ENCODE measurements at regions of chr22 and their contacts with region 1.

Region 1: GRCh38 chr22:30289134-30289979 is at the start of gene CASTOR1:
- DNase-seq: peak; percentile 85 to 94
- H3K4me3 ChIP-seq: peak within 1 kb of the TSS; percentile 87
- H3K27ac ChIP-seq: peak within 1 kb of the TSS; percentile 44
- H3K4me1 ChIP-seq: peaks cover 32% of the 10 kb centered on the region
- H3K27me3 ChIP-seq: no peaks in the 10 kb centered on the region
- CTCF ChIP-seq: no peak
- total RNA-seq, gene CASTOR1: 10.6 and 11.1 TPM in 2 replicates

Region 2: DNA sequence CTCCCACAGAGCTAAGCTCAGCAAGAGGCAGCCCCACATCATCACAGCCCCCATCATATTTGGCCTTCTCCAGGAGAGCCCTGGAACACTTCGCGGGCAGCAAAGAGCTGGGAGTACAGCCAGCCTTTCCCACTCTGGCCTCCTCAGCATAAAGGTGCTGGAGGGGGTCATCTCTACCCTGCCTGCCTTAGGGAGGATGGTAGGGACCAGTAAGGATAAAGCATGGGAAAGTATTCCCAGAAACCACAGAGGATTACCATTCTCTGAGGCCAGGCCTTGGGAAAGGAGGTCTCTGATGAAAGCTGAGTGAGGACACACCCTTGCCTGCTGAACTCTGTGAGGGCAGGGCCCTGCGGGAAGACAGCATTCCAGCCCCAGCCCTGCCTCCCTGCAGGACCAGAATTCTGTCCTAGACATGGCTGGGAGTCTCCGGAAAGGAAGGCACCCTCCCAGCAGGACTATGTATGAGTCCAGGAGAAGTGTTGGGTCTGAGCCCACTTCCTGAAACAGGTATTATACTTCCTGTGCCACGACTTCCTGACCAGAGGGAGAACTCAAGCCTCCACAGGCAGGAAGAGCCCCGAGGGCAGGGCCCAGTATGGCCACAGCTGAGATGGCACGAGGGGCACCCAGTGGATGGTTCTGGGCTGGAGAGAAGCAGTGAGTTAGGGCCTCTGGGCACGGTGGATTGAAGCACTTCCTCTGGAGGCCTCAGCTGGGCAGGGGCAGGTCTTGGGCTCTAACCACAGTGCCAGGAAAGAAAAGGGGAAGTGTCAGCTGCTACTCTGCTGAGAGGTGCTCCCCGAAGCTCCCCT is 12.8 kb after region 1 on chr22:
- CTCF ChIA-PET with region 1: interaction called, 19 read pairs
- POLR2A ChIA-PET with region 1: no interaction called
- intact Hi-C with region 1: loop called (anchors 1 kb)
- DNase-seq: peak; percentile 82 to 95
- H3K4me3 ChIP-seq: no peak overlapping the region; the same call in 1 of the 2 replicates
- H3K27ac ChIP-seq: peak overlapping the region; percentile 95
- H3K4me1 ChIP-seq: peaks cover 97% of the 10 kb centered on the region
- H3K27me3 ChIP-seq: no peaks in the 10 kb centered on the region
- CTCF ChIP-seq: no peak

Region 3: DNA sequence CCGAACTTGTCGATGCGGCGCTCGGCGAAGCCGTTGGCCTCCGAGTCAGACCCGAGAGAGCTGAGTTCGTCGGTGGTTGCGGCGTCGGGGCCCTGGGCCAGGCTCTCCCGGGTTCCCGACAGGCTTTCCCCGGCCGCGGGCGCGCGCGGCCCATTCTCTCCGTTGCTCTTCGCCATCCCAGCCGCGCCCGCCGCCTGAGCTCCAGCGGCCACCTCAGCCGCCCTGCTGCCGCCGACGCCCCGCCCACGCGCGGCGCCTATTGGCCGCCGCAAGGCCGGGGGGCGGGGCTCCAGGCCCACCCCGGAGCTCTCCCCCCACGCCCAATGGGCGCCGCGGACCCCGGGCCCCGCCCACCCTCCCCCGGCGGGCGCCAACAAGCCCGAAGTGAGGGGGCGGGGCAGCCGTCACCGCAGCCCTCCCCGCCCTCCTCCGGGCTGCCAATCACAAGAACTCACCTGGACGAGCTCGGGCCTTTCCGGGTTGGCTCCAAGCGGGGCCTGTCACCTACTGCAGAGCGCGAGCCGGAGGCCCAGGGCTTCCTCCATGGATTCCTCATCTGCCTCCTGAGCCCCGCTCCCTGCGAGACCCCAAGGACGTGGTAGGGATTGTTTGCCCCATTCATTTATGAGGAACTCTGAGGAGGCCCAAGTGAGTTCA is 37.5 kb after region 1 on chr22 and contains the start of gene TBC1D10A:
- CTCF ChIA-PET with region 1: interaction called, 31 read pairs
- POLR2A ChIA-PET with region 1: interaction called, 3 read pairs
- intact Hi-C with region 1: loop called (anchors 1 kb)
- DNase-seq: peak; percentile 90 to 94
- H3K4me3 ChIP-seq: peak within 1 kb of the TSS; percentile 97
- H3K27ac ChIP-seq: peak within 1 kb of the TSS; percentile 53
- H3K4me1 ChIP-seq: peaks cover 34% of the 10 kb centered on the region
- H3K27me3 ChIP-seq: no peaks in the 10 kb centered on the region
- CTCF ChIP-seq: no peak
- total RNA-seq, gene TBC1D10A: 24.3 and 26.2 TPM in 2 replicates

Region 4: DNA sequence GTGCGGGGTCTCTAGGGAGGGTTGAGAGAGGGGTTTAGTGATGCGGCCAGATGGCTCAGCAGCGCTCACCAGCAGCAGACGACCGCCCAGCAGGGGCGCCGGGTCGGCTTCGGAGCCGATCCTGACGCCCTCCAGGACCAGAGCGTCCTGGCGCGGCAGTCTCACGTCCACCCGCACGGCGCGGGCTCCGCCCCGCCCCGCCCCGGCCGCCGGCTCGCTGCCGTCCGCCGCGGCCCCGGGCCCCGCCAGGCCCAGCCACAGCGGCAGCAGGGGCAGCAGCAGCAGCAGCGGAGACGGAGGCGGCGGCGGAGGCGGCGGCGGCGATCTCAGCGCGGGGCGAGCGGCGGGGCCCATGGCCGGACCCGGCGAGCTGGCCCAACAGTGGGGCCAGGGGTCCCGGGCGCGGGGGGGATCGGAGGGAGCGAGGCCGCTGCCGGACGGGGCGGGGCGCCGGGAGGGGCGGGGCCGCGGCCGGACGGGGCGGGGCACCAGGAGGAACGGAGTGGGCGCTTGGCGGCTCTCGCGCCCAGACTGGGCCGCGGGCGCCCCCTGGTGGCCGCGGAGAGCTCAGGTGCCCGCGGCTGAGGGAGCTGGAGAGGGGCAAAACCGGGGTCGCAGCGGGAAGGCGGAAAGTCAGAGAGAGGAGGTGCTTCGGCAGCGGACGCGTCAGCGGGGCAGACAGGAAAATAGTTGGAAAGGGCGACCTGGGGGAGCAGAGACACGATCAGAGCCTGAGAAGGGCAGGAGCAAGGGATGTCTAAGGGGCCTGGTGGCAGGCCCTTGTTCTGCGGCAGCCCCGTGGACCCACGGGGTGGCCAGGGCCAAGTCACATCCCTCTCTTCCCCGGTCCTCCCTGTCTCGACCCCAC is 97.8 kb after region 1 on chr22 and contains the start of gene RNF215:
- CTCF ChIA-PET with region 1: interaction called, 12 read pairs
- POLR2A ChIA-PET with region 1: interaction called, 15 read pairs
- intact Hi-C with region 1: loop called (anchors 1 kb)
- DNase-seq: peak; percentile 52 to 89
- H3K4me3 ChIP-seq: peak within 1 kb of the TSS; percentile 65
- H3K27ac ChIP-seq: no peak within 1 kb of the TSS
- H3K4me1 ChIP-seq: peaks cover 15% of the 10 kb centered on the region
- H3K27me3 ChIP-seq: no peaks in the 10 kb centered on the region
- CTCF ChIP-seq: peak; percentile 94
- total RNA-seq, gene RNF215: 24.0 and 33.8 TPM in 2 replicates

Region 5: DNA sequence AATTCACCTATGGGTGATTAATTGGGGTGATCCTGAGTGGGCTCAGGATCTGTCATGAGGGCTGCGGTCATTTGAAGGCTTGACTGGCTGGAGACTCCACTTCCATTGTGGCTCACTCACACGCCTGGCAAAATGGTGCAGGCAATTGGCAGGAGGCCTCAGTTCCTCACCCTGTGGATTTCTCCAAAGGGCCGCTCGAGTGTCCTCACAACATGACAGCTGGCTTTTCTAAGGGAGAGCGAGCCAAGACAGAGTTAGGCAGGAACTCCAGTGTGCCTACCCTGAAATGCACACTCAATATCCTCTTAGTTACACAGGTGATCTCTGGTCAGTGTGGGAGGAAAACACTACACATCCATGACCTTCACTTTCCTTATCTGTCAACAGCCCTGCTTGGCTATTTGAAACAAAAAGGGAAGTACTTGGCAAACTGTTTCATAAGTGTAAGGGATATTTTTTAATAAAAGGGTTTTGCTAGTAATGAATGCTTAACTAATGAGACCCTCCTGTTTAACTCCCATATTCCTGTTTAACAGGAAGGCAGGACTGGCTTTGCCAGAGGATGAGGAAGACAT is 431.0 kb after region 1 on chr22:
- CTCF ChIA-PET with region 1: no interaction called
- POLR2A ChIA-PET with region 1: interaction called, 19 read pairs
- intact Hi-C with region 1: no loop called
- DNase-seq: no peak
- H3K4me3 ChIP-seq: no peak overlapping the region
- H3K27ac ChIP-seq: no peak overlapping the region
- H3K4me1 ChIP-seq: peaks cover 15% of the 10 kb centered on the region
- H3K27me3 ChIP-seq: no peaks in the 10 kb centered on the region
- CTCF ChIP-seq: no peak